Left colon (tissue), 2 donors: ENCODE measurements at regions of chr7 and their contacts with region 1.

Region 1: GRCh38 chr7:7681179-7681935 is 37.0 kb downstream of the RPA3 start:
- DNase-seq: peak in 1 of 2 donors; percentile 32
- ATAC-seq: peak; percentile 81

Region 2: GRCh38 chr7:7761340-7761980 is 80.1 kb after region 1 on chr7:
- intact Hi-C with region 1: loop called in 1 of 2 experiments (anchors 5 kb)
- DNase-seq: no peak
- ATAC-seq: peak; percentile 48

Region 3: DNA sequence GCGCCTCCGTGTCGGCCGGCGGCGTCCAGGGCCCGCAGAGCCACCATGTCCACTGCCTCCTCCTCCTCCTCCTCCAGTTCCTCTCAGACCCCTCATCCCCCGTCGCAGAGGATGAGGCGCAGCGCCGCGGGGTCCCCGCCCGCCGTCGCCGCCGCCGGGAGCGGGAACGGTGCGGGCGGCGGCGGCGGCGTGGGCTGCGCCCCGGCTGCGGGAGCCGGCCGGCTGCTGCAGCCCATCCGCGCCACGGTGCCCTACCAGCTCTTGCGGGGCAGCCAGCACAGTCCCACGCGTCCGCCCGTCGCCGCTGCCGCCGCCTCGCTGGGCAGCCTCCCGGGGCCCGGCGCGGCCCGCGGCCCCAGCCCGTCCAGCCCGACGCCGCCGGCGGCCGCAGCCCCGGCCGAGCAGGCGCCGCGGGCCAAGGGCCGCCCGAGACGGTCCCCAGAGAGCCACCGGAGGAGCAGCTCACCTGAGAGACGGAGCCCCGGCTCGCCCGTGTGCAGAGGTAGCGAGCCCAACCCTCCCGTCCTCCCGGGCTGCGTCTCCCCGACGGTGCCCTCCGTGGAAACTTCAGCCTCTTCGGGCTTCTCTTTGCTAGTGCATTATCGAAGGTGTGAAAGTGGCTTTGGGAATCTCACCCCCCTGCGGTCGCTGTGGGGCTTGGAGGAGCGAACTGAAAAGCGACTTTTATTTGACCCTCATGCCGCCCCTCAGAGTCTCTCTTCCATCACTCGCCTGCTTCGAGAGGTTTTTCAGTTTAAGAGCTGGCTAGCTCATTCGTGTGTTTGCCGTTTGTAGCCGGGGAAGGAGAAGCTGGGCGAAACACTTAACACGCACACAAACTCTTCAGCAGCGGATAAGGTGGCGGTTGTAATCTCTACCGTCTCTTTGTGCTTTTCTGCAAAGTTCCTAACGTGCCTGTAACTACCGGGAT is 288.2 kb after region 1 on chr7:
- intact Hi-C with region 1: loop called in 1 of 2 experiments (anchors 10 kb)
- DNase-seq: peak; percentile 38 to 56
- ATAC-seq: peak; percentile 15